Activated CD4-positive, alpha-beta T cell treated with anti-CD3 and anti-CD28 coated beads for 36 hours (primary cell): ENCODE measurements at regions of chr18 and their contacts with region 1.

Region 1: GRCh38 chr18:12408247-12408869 is 629 bp downstream of the PRELID3A start:
- DNase-seq: peak; percentile 18
- ATAC-seq: no peak
- H3K4me3 Mint-ChIP-seq: peak overlapping the region; percentile 74
- H3K27ac Mint-ChIP-seq: peak overlapping the region; percentile 31
- H3K4me1 Mint-ChIP-seq: peaks cover 22% of the 10 kb centered on the region
- H3K27me3 Mint-ChIP-seq: peaks cover 29% of the 10 kb centered on the region

Region 2: DNA sequence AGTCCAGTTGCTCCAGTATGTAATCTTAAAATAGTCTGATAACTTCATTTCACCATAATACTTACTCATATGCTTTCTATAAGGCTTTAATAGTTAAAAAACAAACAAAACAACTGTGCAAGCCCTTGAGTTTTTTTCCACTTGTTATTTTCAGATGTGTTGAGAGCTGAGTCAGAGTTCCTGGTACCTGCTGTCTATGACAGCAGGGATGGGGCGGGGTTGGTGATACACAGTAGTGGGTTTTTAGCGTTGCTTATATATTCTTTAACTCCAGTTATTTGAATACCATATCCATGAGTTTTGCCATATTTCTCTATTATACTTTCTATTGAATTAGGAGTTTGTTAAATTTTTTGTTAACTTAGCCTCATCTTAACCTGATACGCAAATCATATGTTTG is 1877.5 kb before region 1 on chr18:
- CTCF ChIA-PET with region 1: no interaction called
- POLR2A ChIA-PET with region 1: no interaction called
- intact Hi-C with region 1: no loop called
- DNase-seq: peak; percentile 75
- ATAC-seq: peak; percentile 64
- H3K4me3 Mint-ChIP-seq: no peak overlapping the region
- H3K27ac Mint-ChIP-seq: peak overlapping the region; percentile 97
- H3K4me1 Mint-ChIP-seq: peaks cover 40% of the 10 kb centered on the region
- H3K27me3 Mint-ChIP-seq: no peaks in the 10 kb centered on the region

Region 3: GRCh38 chr18:12391618-12392165 is 16.7 kb before region 1 on chr18:
- CTCF ChIA-PET with region 1: interaction called, 12 read pairs
- POLR2A ChIA-PET with region 1: no interaction called
- intact Hi-C with region 1: no loop called
- DNase-seq: peak; percentile 72
- ATAC-seq: peak; percentile 97
- H3K4me3 Mint-ChIP-seq: no peak overlapping the region
- H3K27ac Mint-ChIP-seq: no peak overlapping the region
- H3K4me1 Mint-ChIP-seq: no peaks in the 10 kb centered on the region
- H3K27me3 Mint-ChIP-seq: peaks cover 6% of the 10 kb centered on the region

Region 4: GRCh38 chr18:12420831-12421421 is 12.6 kb after region 1 on chr18:
- CTCF ChIA-PET with region 1: interaction called, 3 read pairs
- POLR2A ChIA-PET with region 1: interaction called, 15 read pairs
- intact Hi-C with region 1: no loop called
- DNase-seq: no peak
- ATAC-seq: no peak
- H3K4me3 Mint-ChIP-seq: peak overlapping the region; percentile 55
- H3K27ac Mint-ChIP-seq: no peak overlapping the region
- H3K4me1 Mint-ChIP-seq: peaks cover 3% of the 10 kb centered on the region
- H3K27me3 Mint-ChIP-seq: peaks cover 7% of the 10 kb centered on the region

Region 5: DNA sequence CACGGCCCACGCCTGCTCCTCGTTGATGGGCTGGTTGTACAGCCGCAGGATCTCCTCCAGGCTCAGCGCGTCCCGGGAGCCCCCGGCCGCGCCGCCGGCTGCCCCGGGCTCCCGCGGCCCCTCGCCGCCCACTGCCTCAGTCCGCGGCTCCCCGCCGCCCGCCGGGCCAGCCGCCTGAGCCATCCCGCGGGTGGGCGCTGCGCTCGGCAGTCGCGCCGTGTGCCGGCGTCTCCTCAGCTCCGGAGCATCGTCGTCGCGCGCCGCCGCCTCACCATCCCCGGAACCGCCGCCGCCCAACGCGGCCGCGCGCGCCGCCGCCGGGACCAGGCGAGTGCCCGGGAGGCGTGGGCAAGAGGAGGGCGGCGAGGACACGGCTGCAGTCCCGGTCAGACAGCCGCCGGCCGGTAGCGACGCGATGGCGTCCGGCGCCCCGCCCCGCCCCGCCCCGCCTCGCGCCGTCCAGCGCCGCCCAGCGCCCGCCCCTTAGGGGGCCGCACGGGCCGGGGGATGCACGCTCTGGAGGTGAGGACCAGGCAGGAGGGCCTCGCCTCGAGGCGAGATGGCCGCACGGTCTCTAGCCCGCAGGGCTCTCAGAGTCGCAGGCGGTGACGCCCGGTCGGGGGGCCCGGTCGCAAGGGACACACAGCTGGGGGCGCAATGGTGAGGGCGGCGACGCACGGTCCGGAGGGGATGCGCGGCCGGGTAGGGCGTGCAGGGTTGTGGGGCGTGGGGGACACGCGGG is 249.5 kb after region 1 on chr18 and contains the start of gene SPIRE1:
- CTCF ChIA-PET with region 1: no interaction called
- POLR2A ChIA-PET with region 1: no interaction called
- intact Hi-C with region 1: loop called in 1 of 2 experiments (anchors 1 kb)
- DNase-seq: peak; percentile 61
- ATAC-seq: peak; percentile 57
- H3K4me3 Mint-ChIP-seq: peak within 1 kb of the TSS; percentile 71
- H3K27ac Mint-ChIP-seq: no peak within 1 kb of the TSS
- H3K4me1 Mint-ChIP-seq: peaks cover 17% of the 10 kb centered on the region
- H3K27me3 Mint-ChIP-seq: peaks cover 20% of the 10 kb centered on the region
- total RNA-seq, gene SPIRE1: 3.0 to 3.8 TPM

Region 6: GRCh38 chr18:12947355-12948041 is 539.1 kb after region 1 on chr18 and contains the start of gene SEH1L:
- CTCF ChIA-PET with region 1: no interaction called
- POLR2A ChIA-PET with region 1: no interaction called
- intact Hi-C with region 1: loop called in 1 of 2 experiments (anchors 1 kb)
- DNase-seq: peak; percentile 100
- ATAC-seq: peak; percentile 86
- H3K4me3 Mint-ChIP-seq: peak within 1 kb of the TSS; percentile 89
- H3K27ac Mint-ChIP-seq: peak within 1 kb of the TSS; percentile 97
- H3K4me1 Mint-ChIP-seq: peaks cover 34% of the 10 kb centered on the region
- H3K27me3 Mint-ChIP-seq: no peaks in the 10 kb centered on the region
- total RNA-seq, gene SEH1L: 100 to 107 TPM